ENCODE measurements at regions of chr1 and their contacts with region 1.

Region 1: DNA sequence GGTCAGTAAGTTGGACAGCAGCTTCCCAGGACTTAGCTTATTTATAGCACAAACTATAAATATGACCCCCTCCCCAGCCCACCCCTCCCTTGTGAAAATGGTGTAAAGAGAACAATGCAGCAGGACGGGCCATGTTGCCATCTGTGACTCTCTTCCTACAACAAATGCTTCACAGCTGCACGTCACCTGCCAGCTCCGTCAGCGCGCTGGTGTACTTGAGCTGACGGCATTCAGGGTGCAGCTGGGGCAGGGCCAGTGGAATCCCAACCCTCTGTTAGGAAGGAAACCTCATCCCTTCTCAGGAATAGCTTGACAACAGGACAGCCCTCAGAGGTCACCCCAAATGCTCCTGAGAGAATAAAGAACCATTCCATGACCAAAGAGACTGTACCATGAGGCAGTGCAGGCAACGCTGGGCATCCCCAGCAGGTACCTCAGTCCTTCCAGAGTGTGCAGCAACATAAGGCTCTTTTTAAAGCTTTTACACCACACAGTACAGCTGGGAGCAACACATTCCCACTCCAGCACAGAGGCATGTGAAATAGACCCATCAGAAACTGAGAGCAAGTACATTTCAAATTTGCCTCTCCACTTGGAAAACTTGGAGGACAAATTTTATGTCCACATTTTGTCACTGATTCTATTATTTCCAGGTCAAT is 85.0 kb downstream of the ATP1A1 start:
- DNase-seq: no peak
- H3K4me3 ChIP-seq: no peak overlapping the region
- H3K27ac ChIP-seq: no peak overlapping the region
- H3K4me1 ChIP-seq: no peaks in the 10 kb centered on the region
- H3K27me3 ChIP-seq: no peaks in the 10 kb centered on the region
- CTCF ChIP-seq: no peak
- POLR2A ChIP-seq: no peak

Region 2: DNA sequence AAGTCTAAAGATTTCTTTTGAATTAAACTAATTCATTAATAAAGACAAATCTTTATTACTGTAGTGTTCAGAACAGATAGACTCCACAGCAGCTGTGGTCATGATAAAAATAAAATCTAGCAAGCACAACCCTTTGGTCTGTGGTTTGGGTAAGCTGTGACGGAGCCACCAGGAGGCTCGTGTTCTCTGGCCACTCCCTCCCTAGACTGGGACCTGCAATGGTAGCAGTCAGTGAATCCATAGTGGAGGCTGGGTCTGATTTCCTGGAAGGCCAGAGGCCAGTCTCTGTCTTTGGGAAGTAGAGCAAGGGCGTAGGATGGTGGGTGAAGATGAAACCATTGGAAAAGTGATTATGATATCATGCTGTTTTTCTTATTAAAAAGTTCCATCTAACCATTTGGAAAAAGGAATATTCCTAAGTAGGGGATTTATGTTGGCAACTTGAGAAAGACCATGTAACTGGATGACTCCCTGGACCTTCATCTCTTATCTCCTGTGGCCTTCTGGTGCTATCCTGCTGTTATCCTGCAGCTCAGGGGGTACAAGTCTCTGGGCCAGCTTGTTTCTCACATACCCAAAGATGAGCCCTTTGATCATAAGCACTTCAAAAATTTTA is 1186.7 kb after region 1 on chr1:
- intact Hi-C with region 1: loop called (anchors 10 kb)
- DNase-seq: no peak
- H3K4me3 ChIP-seq: no peak overlapping the region
- H3K27ac ChIP-seq: no peak overlapping the region
- H3K4me1 ChIP-seq: no peaks in the 10 kb centered on the region
- H3K27me3 ChIP-seq: no peaks in the 10 kb centered on the region
- CTCF ChIP-seq: no peak
- POLR2A ChIP-seq: no peak